ENCODE measurements at regions of chr7 and their contacts with region 1.

Region 1: GRCh38 chr7:101869542-101870290 is 52.3 kb downstream of the CUX1 start:
- DNase-seq: no peak
- H3K4me3 ChIP-seq: no peak overlapping the region
- H3K4me3 Mint-ChIP-seq: no peak overlapping the region
- H3K27ac ChIP-seq: no peak overlapping the region
- H3K27ac Mint-ChIP-seq: peak overlapping the region; percentile 24 to 86 (median 71)
- H3K4me1 ChIP-seq: no peaks in the 10 kb centered on the region
- H3K4me1 Mint-ChIP-seq: peaks cover 18% of the 10 kb centered on the region
- H3K27me3 ChIP-seq: no peaks in the 10 kb centered on the region
- H3K27me3 Mint-ChIP-seq: peaks cover 0 to 4% (median 0%) of the 10 kb centered on the region in 3 donors
- CTCF ChIP-seq: no peak

Region 2: GRCh38 chr7:101900103-101900502 is 30.4 kb after region 1 on chr7:
- intact Hi-C with region 1: loop called in 1 of 2 experiments (anchors 5 kb)
- DNase-seq: no peak
- H3K4me3 ChIP-seq: no peak overlapping the region
- H3K4me3 Mint-ChIP-seq: no peak overlapping the region
- H3K27ac ChIP-seq: peak overlapping the region in 1 of 2 donors; percentile 45
- H3K27ac Mint-ChIP-seq: peak overlapping the region in 3 of 7 donors; percentile 57 to 81 (median 77)
- H3K4me1 ChIP-seq: peaks cover 3 to 13% of the 10 kb centered on the region in 2 donors
- H3K4me1 Mint-ChIP-seq: peaks cover 21% of the 10 kb centered on the region
- H3K27me3 ChIP-seq: no peaks in the 10 kb centered on the region
- H3K27me3 Mint-ChIP-seq: peaks cover 0 to 2% (median 0%) of the 10 kb centered on the region in 3 donors
- CTCF ChIP-seq: no peak